ENCODE measurements at regions of chr1 and their contacts with region 1.

Region 1: GRCh38 chr1:235128456-235129328 is at the start of gene TOMM20:
- DNase-seq: peak; percentile 98 to 99 (median 98)
- H3K4me3 ChIP-seq: peak within 1 kb of the TSS; percentile 86 to 96 (median 89)
- H3K4me3 Mint-ChIP-seq: peak within 1 kb of the TSS; percentile 94 to 96
- H3K27ac ChIP-seq: peak within 1 kb of the TSS; percentile 88 to 96
- H3K27ac Mint-ChIP-seq: peak within 1 kb of the TSS; percentile 96 to 99 (median 98)
- H3K4me1 ChIP-seq: peaks cover 20 to 28% of the 10 kb centered on the region in 2 donors
- H3K4me1 Mint-ChIP-seq: peaks cover 20% of the 10 kb centered on the region
- H3K27me3 ChIP-seq: no peaks in the 10 kb centered on the region
- H3K27me3 Mint-ChIP-seq: no peaks in the 10 kb centered on the region
- CTCF ChIP-seq: no peak
- polyA plus RNA-seq, gene TOMM20: 26.5 to 34.8 (median 31.5) TPM

Region 2: DNA sequence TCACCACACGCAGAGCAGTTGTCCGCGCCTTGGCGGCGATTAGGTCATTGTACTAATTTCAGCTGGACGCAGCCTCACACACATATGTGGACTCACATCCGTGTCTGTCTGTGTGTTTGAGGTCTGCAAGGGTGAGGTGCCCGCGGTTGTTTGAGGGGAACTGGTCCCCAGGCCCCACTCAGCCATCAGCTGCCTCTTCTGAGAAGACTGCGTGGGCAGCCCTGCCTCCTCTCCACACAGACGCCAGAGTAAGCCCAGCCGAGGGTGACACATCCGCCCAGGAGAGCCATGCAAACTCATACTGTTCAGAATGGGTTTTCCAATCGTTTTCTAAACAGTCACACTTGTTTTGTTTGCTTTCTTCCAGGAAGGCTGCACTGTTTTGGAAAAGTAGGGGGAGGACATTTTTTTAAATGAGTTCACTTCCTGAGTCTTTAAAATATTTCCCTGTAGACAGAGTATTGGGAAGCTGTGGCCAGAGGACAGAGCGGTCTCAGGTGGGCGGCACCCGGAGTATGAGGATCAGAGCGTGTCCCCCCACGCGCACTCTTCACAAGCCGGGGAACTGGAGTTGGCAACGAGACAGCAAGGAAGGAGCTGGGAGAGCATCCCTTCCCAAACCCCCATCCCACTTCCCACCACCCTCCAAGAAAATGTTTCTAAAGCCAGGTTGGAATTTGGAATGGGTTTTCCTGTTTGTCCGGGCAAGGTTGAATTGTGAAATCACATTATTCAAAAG is 53.3 kb before region 1 on chr1:
- intact Hi-C with region 1: no loop called
- DNase-seq: peak; percentile 66 to 70 (median 67)
- H3K4me3 ChIP-seq: no peak overlapping the region
- H3K4me3 Mint-ChIP-seq: peak overlapping the region in 1 of 2 donors; percentile 48
- H3K27ac ChIP-seq: peak overlapping the region in 1 of 2 donors; percentile 80
- H3K27ac Mint-ChIP-seq: peak overlapping the region; percentile 73 to 95 (median 91)
- H3K4me1 ChIP-seq: peaks cover 64 to 77% of the 10 kb centered on the region in 2 donors
- H3K4me1 Mint-ChIP-seq: peaks cover 39% of the 10 kb centered on the region
- H3K27me3 ChIP-seq: no peaks in the 10 kb centered on the region
- H3K27me3 Mint-ChIP-seq: peaks cover 0 to 2% (median 0%) of the 10 kb centered on the region in 3 donors
- CTCF ChIP-seq: no peak

Region 3: GRCh38 chr1:235160957-235161684 is 32.4 kb after region 1 on chr1 and contains the start of gene RBM34:
- intact Hi-C with region 1: loop called in 1 of 2 experiments (anchors 5 kb)
- DNase-seq: peak; percentile 88 to 92 (median 91)
- H3K4me3 ChIP-seq: peak within 1 kb of the TSS; percentile 75 to 97 (median 95)
- H3K4me3 Mint-ChIP-seq: peak within 1 kb of the TSS; percentile 99 to 100
- H3K27ac ChIP-seq: peak within 1 kb of the TSS; percentile 94 to 96
- H3K27ac Mint-ChIP-seq: peak within 1 kb of the TSS; percentile 97 to 99 (median 99)
- H3K4me1 ChIP-seq: peaks cover 14 to 23% of the 10 kb centered on the region in 2 donors
- H3K4me1 Mint-ChIP-seq: peaks cover 12% of the 10 kb centered on the region
- H3K27me3 ChIP-seq: no peaks in the 10 kb centered on the region
- H3K27me3 Mint-ChIP-seq: no peaks in the 10 kb centered on the region
- CTCF ChIP-seq: no peak
- polyA plus RNA-seq, gene RBM34: 20.5 to 25.7 (median 22.5) TPM

Measured in CD14-positive monocyte (primary cell).